ENCODE measurements at regions of chr5 and their contacts with region 1.

Region 1: GRCh38 chr5:146446853-146447733 is at the start of gene TCERG1:
- DNase-seq: peak; percentile 99

Region 2: DNA sequence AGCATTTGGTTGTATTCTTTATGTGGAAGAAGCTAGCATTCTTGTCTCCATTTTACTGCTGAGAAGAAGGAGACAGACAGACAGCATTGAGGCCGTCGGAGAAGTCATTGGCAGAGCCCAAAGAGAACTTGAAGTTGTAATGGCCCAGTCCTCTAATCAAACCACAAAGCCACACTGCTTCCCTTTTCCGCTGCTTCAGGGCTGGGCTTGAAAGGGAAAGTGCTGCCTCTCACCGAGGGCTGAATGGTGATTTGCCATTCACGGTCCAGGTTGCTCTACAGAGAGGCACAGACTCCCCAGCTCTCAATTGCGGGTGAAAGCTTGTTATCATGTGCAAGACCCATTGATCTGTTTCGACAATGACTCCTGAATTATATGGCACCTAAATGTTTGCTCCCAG is 134.1 kb before region 1 on chr5:
- in situ Hi-C with region 1: loop called (anchors 25 kb)
- DNase-seq: no peak

Region 3: GRCh38 chr5:146624179-146624578 is 177.1 kb after region 1 on chr5:
- in situ Hi-C with region 1: no loop called
- DNase-seq: no peak

Measured in ACHN (cell line).